Right ventricle myocardium superior (tissue), 1 donor: ENCODE measurements at regions of chr19 and their contacts with region 1.

Region 1: DNA sequence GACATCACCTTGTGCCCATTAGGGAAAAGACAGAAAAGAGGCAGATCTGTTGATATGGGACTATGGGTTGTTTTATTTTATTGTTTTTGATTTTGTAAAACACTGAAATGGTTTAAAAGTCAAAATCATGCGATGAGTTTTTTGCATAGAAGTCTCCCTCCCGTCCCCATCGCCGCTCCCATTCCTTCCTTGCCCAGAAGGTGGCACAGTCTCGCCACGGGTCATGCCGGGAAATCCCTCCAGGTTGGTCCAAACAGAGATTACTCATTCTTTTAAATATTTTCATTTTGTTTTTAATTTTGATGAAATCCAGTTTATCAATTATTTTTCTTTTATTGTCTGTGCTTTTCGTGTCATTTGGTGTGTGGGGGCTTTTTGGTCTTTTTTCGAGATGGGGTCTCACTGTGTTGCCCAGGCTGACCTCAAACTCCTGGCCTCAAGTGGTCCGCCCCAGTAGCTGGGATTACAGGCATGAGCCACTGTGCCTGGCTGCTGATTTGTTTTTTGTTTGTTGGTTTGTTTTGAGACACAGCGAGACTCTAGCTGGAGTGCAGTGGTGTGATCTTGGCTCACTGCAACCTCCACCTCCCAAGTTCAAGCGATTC is 9.2 kb downstream of the PGPEP1 start:
- DNase-seq: peak; percentile 59
- ATAC-seq: peak; percentile 62

Region 2: GRCh38 chr19:18307271-18307681 is 42.4 kb before region 1 on chr19:
- intact Hi-C with region 1: no loop called
- DNase-seq: no peak
- ATAC-seq: no peak

Region 3: GRCh38 chr19:18392417-18392816 is 42.8 kb after region 1 on chr19:
- intact Hi-C with region 1: loop called (anchors 5 kb)
- DNase-seq: peak; percentile 74
- ATAC-seq: peak; percentile 27

Region 4: DNA sequence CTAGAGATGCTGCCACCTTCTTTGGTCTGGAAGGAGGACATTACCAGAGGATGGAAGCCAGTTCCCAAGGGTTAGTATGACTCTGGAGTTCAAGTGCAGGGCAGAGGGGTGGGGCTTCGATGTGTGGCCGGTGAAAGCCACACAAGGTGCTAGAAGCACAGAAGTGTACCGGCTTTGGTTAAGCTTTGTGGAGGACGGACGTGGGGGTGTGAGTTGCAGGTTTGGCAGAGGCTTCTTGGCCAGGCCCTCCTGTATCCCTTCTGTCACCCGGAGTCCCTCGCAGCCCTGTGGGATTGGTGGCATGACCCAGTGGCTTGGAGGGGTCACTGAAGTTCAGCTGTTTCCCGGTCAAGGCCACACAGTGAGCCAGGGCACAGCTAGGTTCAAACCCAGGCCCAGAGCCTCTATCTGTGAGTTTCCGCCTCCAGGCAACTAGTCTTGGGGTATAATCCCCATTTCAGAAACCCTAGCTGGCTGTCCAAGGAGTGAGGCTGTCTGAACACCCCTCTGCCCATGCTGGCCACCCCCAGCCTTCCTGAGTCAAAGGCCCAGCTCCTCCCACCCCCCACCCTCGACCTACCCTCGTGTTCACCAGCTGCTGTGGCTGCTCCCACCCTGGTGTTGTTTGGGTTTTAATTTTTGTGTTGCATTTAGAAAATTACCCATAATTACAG is 65.0 kb after region 1 on chr19:
- intact Hi-C with region 1: loop called (anchors 5 kb)
- DNase-seq: peak; percentile 60
- ATAC-seq: no peak